WTC11 (cell line): ENCODE measurements at regions of chr2 and their contacts with region 1.

Region 1: GRCh38 chr2:223101340-223102039 is 49.5 kb downstream of the KCNE4 start:
- DNase-seq: peak; percentile 66
- ATAC-seq: peak; percentile 100
- H3K4me3 Mint-ChIP-seq: no peak overlapping the region
- H3K27ac Mint-ChIP-seq: no peak overlapping the region
- H3K4me1 Mint-ChIP-seq: peaks cover 23% of the 10 kb centered on the region
- H3K27me3 Mint-ChIP-seq: peaks cover 3% of the 10 kb centered on the region; the same call in 1 of the 2 replicates
- CTCF ChIP-seq: peak; percentile 24; the same call in 1 of the 2 replicates

Region 2: GRCh38 chr2:222982010-222982908 is 119.2 kb before region 1 on chr2:
- CTCF ChIA-PET with region 1: interaction called, 10 read pairs
- POLR2A ChIA-PET with region 1: no interaction called
- DNase-seq: peak; percentile 46
- ATAC-seq: peak; percentile 79
- H3K4me3 Mint-ChIP-seq: no peak overlapping the region
- H3K27ac Mint-ChIP-seq: no peak overlapping the region
- H3K4me1 Mint-ChIP-seq: peaks cover 30% of the 10 kb centered on the region
- H3K27me3 Mint-ChIP-seq: peaks cover 11% of the 10 kb centered on the region
- CTCF ChIP-seq: no peak

Region 3: DNA sequence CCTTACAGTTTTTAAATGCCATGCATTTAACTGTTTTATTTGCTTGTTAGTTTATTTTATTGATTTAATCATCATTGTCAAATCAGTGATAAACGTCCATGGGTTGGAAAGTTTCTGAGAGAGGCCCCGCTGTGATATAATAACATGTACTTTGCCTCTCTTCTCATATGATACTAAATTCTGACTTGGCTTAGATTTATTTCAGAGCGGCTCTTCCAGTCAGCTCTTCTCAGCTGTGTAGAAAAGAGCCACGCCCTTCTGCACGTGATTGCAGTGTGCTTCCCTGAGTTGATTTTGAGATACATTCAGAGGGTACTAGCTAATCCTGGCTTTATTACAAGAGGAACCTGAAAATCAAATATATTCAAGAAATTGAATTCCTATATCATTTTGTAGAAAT is 169.1 kb after region 1 on chr2:
- CTCF ChIA-PET with region 1: no interaction called
- POLR2A ChIA-PET with region 1: no interaction called
- DNase-seq: no peak
- ATAC-seq: no peak
- H3K4me3 Mint-ChIP-seq: no peak overlapping the region
- H3K27ac Mint-ChIP-seq: no peak overlapping the region
- H3K4me1 Mint-ChIP-seq: no peaks in the 10 kb centered on the region
- H3K27me3 Mint-ChIP-seq: no peaks in the 10 kb centered on the region
- CTCF ChIP-seq: no peak